ENCODE measurements at regions of chr9 and their contacts with region 1.

Region 1: DNA sequence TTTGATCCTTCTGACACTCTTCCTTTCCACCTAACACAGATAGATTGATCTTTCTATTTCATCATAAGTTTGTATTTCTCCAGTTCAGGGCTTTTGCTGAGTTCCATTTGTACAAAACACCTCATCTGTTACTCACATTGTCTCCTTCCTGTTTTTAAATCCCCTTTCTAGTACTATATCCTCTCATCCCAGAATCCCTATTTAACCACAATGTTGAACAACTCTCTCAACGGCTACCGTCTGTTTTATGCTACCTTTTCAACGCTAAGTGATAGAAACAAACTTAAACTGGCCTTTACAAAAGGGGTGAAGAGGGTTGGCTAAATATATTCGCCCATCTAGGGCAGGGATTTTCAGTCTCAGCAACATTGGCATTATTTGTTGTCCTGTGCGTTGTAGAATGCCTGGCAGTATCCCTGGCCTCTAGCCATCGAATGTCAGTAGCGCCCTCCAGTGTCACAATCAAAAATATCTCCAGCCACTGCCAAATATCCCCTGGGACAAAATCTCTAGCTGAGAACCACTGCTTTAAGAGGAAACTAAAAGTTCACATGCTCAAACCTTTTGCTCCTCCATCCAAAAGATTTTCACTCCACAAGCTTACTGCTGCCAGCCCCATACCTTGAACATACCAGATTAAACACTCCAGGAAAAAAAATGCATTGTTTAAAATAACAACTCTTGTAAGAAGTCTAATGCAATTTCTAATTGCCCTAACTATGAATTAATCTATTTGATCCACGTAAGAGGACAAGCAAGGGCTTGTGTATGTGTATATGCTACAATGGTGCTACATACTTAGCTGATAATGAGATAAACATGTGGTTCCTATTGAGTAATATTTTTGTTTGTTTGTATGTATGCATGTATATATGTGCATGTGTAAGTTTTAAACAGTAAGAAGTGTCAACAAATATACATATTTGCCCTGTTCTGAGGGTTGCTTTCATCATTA is 344.0 kb downstream of the PTPRD start:
- DNase-seq: peak; percentile 28
- H3K4me3 ChIP-seq: peak overlapping the region in 1 of 3 experiments; percentile 9
- H3K27ac ChIP-seq: no peak overlapping the region
- H3K4me1 ChIP-seq: peaks cover 16% of the 10 kb centered on the region
- H3K27me3 ChIP-seq: no peaks in the 10 kb centered on the region
- CTCF ChIP-seq: peak; percentile 60 to 77

Region 2: DNA sequence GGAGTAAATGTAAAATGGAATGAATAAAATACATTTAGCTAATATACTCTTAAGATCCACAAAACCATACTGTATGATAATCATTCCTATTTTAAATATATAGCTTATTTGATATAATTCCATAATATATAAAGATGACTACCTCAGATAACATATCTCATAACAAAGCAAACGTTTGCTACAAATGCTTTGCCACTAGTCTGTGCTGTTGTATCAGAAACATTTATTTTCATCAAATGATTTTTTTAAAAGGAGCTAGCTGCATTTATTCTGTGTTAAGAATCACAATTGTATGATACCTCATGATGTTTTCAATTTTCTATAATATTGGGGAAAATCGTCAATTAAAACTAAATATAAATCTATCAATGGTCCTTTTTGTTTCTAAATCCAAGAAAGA is 223.2 kb before region 1 on chr9:
- CTCF ChIA-PET with region 1: interaction called, 20 read pairs
- dilution Hi-C with region 1: no loop called
- in situ Hi-C with region 1: loop called in 1 of 2 experiments (anchors 25 kb)
- intact Hi-C with region 1: loop called (anchors 1 kb)
- DNase-seq: peak; percentile 26
- H3K4me3 ChIP-seq: no peak overlapping the region
- H3K27ac ChIP-seq: no peak overlapping the region
- H3K4me1 ChIP-seq: peaks cover 2% of the 10 kb centered on the region
- H3K27me3 ChIP-seq: no peaks in the 10 kb centered on the region
- CTCF ChIP-seq: peak; percentile 68 to 69

Region 3: DNA sequence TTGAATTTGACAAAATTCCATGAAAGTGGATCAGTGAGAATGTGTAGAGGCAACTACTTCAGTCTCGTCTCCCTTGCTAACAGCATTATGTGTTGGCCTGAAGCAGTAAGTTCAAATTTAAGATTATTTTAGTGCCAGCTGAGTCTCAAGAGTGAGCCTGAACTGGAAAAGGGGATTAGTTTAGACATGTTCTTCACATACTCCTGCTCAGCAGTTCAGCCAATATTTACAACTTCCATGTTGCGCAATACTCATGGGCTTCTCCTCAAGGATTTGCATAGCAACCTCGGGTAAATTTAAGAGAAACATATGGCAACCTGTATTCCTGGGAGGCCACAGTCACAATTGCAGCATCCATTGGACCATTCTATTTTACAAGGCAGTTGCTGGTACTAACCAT is 209.8 kb before region 1 on chr9:
- CTCF ChIA-PET with region 1: no interaction called
- dilution Hi-C with region 1: no loop called
- in situ Hi-C with region 1: loop called (anchors 5 to 25 kb)
- intact Hi-C with region 1: loop called (anchors 1 kb)
- DNase-seq: peak; percentile 88
- H3K4me3 ChIP-seq: no peak overlapping the region
- H3K27ac ChIP-seq: peak overlapping the region; percentile 47
- H3K4me1 ChIP-seq: peaks cover 22% of the 10 kb centered on the region
- H3K27me3 ChIP-seq: no peaks in the 10 kb centered on the region
- CTCF ChIP-seq: no peak

Region 4: DNA sequence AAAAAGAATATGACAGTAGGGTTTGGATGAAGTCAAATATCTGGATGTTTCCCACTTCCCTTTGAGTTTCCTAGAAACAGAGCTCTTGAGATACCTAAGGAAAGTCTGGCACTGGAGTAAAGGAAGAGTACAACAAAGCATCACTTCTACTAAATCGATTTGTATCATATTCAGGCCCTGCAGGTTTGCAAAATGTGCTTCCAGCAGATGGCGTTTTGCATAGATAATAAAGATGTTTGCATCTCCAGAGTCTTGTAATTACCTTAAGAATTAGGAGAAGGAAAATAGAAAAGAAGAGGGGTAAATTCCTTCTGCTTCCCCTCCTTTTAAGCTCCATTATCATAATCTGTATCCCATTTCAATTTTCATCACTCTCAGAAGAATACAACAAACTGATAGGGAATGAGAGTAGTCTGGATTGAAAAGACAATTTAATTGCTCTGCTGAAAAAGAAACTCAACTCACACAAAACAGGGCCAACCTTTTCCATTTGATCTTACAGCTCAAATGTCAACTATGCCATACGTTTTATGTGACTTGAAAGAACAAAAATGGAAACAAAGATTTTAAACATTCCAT is 36.4 kb before region 1 on chr9:
- CTCF ChIA-PET with region 1: no interaction called
- dilution Hi-C with region 1: no loop called
- in situ Hi-C with region 1: no loop called
- intact Hi-C with region 1: loop called (anchors 1 kb)
- DNase-seq: no peak
- H3K4me3 ChIP-seq: no peak overlapping the region
- H3K27ac ChIP-seq: no peak overlapping the region
- H3K4me1 ChIP-seq: no peaks in the 10 kb centered on the region
- H3K27me3 ChIP-seq: no peaks in the 10 kb centered on the region
- CTCF ChIP-seq: peak; percentile 33 to 53

Measured in mammary epithelial cell (primary cell).